ENCODE measurements at regions of chr3 and their contacts with region 1.

Region 1: GRCh38 chr3:95418251-95418650 is 1355.4 kb downstream of the NSUN3 start:
- DNase-seq: no peak

Region 2: GRCh38 chr3:94137377-94137776 is 1280.9 kb before region 1 on chr3:
- intact Hi-C with region 1: no loop called
- DNase-seq: no peak

Region 3: DNA sequence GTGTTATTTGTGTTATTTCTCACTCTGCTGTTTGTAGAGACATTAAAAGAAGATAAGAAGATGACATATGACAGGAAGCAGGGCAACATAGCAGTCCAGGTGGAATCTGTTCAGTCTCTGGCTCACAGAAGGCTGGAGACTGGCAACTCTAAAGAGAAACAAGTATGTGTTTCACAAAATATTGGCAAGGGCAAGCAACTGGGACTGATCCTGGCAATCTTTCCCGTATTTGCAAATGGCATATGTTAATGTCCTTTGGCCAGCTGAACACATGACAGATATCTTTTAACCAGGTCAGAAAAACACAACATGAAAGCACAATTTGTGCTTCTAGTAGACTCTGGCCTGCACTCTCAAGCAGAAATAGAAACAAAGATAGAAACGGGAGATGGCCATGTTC is 42.0 kb after region 1 on chr3:
- intact Hi-C with region 1: no loop called
- DNase-seq: no peak

Region 4: GRCh38 chr3:95474338-95474737 is 56.1 kb after region 1 on chr3:
- intact Hi-C with region 1: loop called in 1 of 2 experiments (anchors 10 kb)
- DNase-seq: no peak

Region 5: DNA sequence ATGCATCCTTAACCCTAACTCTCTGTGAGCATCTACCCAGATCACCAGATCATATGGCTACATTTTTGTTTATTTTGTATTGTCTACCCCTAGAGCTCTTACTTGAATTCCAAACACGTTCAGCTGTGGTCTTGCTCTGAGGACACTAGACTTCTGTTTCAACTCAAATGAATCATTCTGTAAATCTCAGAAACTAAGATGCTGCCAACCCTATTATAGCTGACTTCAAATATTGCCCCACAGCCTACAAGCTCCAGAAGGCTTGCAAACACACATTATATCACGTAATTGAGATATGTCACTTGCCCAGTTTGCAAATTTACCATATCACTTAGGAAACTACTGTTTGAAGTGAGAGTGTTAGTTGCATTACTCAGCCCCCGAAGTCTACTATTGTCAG is 1920.1 kb after region 1 on chr3:
- intact Hi-C with region 1: no loop called
- DNase-seq: no peak